ENCODE measurements at regions of chr10 and their contacts with region 1.

Region 1: GRCh38 chr10:91251430-91252056 is 31.1 kb downstream of the PCGF5 start:
- DNase-seq: peak in 40 of 42 donors; percentile 15 to 87 (median 68)

Region 2: DNA sequence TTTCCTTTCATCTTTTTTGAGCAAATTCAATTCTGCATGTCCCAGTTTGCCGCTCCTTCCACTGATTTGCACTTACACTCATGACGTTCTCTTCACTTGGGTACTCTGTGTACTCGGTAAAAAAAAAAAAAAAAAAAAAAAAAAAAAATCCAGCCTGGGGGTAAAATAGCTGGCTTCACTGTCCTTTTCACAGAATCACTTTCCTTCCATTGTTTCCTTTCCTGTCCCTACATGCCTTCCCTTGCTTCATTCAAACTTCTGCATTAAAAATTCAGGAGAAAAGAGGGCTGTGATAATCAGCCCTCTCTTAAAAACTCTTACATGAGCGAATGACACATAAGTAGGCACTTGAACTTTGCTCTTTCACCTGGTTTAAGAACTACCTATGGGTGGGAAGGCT is 339.4 kb before region 1 on chr10:
- intact Hi-C with region 1: loop called (anchors 5 kb)
- DNase-seq: no peak

Region 3: GRCh38 chr10:91006001-91006751 is 245.4 kb before region 1 on chr10:
- intact Hi-C with region 1: loop called (anchors 2 kb)
- DNase-seq: peak; percentile 10 to 92 (median 68)

Region 4: DNA sequence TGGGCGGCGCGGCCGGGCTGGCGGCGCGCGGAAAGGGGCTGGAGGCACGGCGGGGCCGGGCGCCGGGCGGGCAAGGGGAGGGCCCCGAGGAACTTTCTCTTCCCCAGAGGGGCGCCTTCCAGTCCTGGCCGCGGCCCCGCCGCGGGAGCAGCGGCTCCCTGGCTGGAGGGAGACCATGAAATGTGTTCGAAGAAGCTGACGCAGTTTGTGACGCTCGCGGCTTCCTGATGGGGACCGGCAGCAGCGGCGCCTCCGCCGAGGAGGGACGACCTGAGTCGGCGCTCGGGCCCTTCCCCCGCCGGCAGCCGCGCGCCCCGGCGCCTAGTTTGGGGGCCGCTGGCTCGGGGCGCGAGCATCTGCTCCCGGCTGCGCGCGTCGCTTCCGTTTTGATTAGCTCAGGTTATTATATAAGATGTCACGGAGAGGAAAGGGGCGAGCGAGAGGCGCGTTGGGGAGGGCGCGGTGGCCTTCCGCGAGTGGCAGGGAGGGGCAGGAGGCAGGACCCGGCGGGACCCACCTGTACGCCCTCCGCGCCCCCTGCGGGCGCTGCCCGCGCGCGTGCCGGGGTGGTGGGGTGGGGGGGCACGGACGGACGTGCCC is 88.2 kb before region 1 on chr10:
- intact Hi-C with region 1: no loop called
- DNase-seq: peak; percentile 14 to 86 (median 73)

Region 5: GRCh38 chr10:92239600-92240288 is 988.2 kb after region 1 on chr10:
- intact Hi-C with region 1: no loop called
- DNase-seq: peak in 41 of 42 donors; percentile 23 to 87 (median 69)